Heart right ventricle (tissue), 16 donors: ENCODE measurements at regions of chr15 and their contacts with region 1.

Region 1: DNA sequence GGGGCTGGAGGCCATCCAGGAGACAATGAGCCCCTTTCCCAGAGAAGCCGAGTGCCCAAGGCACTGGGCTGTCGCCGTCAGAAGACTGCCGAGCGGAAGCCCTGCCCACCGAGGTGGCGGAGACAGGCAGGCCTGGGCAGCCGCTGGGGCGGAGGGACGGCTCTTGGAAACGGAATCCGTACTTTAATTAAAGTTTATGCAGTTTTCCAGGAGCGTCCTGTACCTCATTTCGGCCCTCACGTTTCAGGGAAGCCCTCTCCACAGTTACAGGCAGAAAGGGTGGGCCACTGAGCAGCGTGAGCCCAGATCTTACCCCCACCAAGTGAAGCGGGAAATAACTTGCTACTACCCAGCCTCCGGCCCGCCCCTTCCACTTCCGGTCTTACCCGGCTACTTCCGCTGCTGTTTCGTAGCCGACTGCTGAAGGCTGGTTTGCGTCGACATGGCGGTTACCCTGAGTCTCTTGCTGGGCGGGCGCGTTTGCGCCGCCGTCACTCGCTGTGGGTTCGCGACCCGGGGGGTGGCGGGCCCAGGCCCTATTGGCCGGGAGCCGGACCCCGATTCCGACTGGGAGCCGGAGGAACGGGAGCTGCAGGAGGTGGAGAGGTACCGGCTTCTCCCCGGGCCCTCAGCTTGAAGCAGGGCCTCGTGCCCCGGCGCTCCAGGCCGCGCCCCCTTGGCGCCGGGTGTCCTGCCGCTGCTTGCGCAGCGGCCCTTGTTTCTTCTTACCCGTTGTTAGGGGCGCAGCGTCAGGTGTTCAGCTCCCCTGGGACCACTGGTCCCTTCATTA is at the start of gene NGRN:
- DNase-seq: peak; percentile 90 to 94
- ATAC-seq: peak; percentile 95 to 98 (median 96)
- H3K4me3 ChIP-seq: peak within 1 kb of the TSS; percentile 62 to 90 (median 84)
- H3K27ac ChIP-seq: peak within 1 kb of the TSS; percentile 93 to 99 (median 96)
- H3K4me1 ChIP-seq: peaks cover 13 to 62% (median 47%) of the 10 kb centered on the region in 9 donors
- H3K27me3 ChIP-seq: no peaks in the 10 kb centered on the region
- CTCF ChIP-seq: no peak
- total RNA-seq, gene NGRN: 109 to 139 (median 119) TPM

Region 2: GRCh38 chr15:90233376-90234095 is 31.9 kb before region 1 on chr15 and contains the start of gene CIB1:
- intact Hi-C with region 1: loop called in 3 of 10 experiments (anchors 2 to 5 kb)
- DNase-seq: peak; percentile 97 to 98
- ATAC-seq: peak; percentile 92 to 98 (median 95)
- H3K4me3 ChIP-seq: peak within 1 kb of the TSS; percentile 63 to 100 (median 90)
- H3K27ac ChIP-seq: peak within 1 kb of the TSS; percentile 77 to 98 (median 92)
- H3K4me1 ChIP-seq: peaks cover 4 to 56% (median 47%) of the 10 kb centered on the region in 9 donors
- H3K27me3 ChIP-seq: no peaks in the 10 kb centered on the region
- CTCF ChIP-seq: peak in 8 of 9 donors; percentile 11 to 61 (median 44)
- total RNA-seq, gene CIB1: 70.5 to 95.6 (median 77.7) TPM

Region 3: GRCh38 chr15:90249203-90249863 is 16.1 kb before region 1 on chr15 and contains the start of gene TTLL13:
- intact Hi-C with region 1: loop called in 1 of 10 experiments (anchors 2 kb)
- DNase-seq: peak; percentile 94 to 97
- ATAC-seq: peak; percentile 93 to 98 (median 98)
- H3K4me3 ChIP-seq: peak within 1 kb of the TSS; percentile 41 to 75 (median 58)
- H3K27ac ChIP-seq: peak within 1 kb of the TSS in 9 of 10 donors; percentile 4 to 82 (median 71)
- H3K4me1 ChIP-seq: peaks cover 0 to 22% (median 15%) of the 10 kb centered on the region in 9 donors
- H3K27me3 ChIP-seq: no peaks in the 10 kb centered on the region
- CTCF ChIP-seq: no peak
- total RNA-seq, gene TTLL13: 0.19 to 0.78 (median 0.24) TPM in 6 of 10 donors, not detected in the others

Region 4: GRCh38 chr15:90818251-90819210 is 553.1 kb after region 1 on chr15:
- intact Hi-C with region 1: no loop called
- DNase-seq: no peak
- ATAC-seq: peak; percentile 34 to 61 (median 47)
- H3K4me3 ChIP-seq: no peak overlapping the region
- H3K27ac ChIP-seq: peak overlapping the region in 4 of 10 donors; percentile 46 to 85 (median 52)
- H3K4me1 ChIP-seq: peaks cover 0 to 40% (median 17%) of the 10 kb centered on the region in 9 donors
- H3K27me3 ChIP-seq: no peaks in the 10 kb centered on the region
- CTCF ChIP-seq: peak in 4 of 9 donors; percentile 17 to 33 (median 26)